Activated naive CD4-positive, alpha-beta T cell treated with anti-CD3 and anti-CD28 coated beads, Interleukin-2, amount 10 ng/mL, durations not matched to agents 7 days and 5 days (primary cell): ENCODE measurements at regions of chr16 and their contacts with region 1.

Region 1: GRCh38 chr16:19898924-19899604 is 14.4 kb upstream of the GPRC5B start:
- DNase-seq: peak; percentile 54
- H3K4me3 Mint-ChIP-seq: no peak overlapping the region
- H3K27ac Mint-ChIP-seq: no peak overlapping the region
- H3K4me1 Mint-ChIP-seq: no peaks in the 10 kb centered on the region
- H3K27me3 Mint-ChIP-seq: peaks cover 21% of the 10 kb centered on the region

Region 2: GRCh38 chr16:20300312-20301097 is 401.4 kb after region 1 on chr16:
- CTCF ChIA-PET with region 1: interaction called, 18 read pairs
- DNase-seq: peak; percentile 46
- H3K4me3 Mint-ChIP-seq: no peak overlapping the region
- H3K27ac Mint-ChIP-seq: no peak overlapping the region
- H3K4me1 Mint-ChIP-seq: no peaks in the 10 kb centered on the region
- H3K27me3 Mint-ChIP-seq: peaks cover 5% of the 10 kb centered on the region

Region 3: DNA sequence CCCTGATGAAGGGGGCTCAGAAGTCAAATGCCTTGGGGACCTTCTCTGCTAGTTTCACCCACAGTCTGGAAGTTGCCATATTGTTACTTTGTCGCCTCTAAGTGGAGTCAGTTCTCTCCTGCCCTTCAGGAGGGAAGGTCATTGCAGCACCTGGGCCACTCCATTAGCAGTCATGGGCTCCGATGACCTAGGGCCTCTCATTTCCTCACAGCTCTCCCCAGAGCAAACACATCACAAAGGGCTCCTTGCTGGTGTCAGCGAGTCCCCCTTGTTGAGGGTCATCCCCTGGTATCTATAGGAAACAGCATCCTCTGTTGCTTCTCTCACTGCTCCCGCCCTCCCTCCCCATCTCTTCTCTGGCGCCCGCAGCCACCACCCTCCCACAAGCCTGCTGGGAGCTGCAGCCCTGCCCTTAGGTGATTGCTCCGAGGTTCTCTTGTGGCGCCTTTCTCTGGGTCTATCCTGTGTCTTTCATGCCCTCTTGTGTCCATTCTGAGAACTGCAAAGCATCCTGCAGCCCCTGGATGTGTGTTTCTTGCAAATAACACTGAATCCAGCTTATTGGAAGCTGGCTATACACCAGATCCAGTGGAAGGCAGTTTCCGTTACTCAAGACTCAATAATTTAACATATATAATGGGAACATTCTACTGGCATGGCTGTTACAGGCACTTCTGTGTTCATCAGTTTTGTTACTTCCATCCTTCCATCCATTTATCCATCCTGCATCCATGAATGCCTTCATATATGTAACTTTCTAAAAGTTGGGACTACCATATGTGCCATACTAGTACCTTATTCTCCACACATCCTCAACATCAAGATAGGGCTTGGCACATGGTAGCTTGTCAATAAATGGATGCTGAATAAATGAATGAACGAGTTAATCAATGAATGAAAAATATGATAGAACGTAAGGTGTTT is 484.3 kb after region 1 on chr16:
- CTCF ChIA-PET with region 1: interaction called, 13 read pairs
- DNase-seq: peak; percentile 58
- H3K4me3 Mint-ChIP-seq: no peak overlapping the region
- H3K27ac Mint-ChIP-seq: no peak overlapping the region
- H3K4me1 Mint-ChIP-seq: no peaks in the 10 kb centered on the region
- H3K27me3 Mint-ChIP-seq: peaks cover 6% of the 10 kb centered on the region